K562 (cell line): ENCODE measurements at regions of chr1 and their contacts with region 1.

Region 1: GRCh38 chr1:209860293-209860881 is 32.6 kb downstream of the UTP25 start:
- DNase-seq: peak; percentile 84 to 92 (median 91)
- ATAC-seq: peak; percentile 99
- H3K4me3 ChIP-seq: no peak overlapping the region
- H3K27ac ChIP-seq: no peak overlapping the region
- H3K4me1 ChIP-seq: no peaks in the 10 kb centered on the region
- H3K27me3 ChIP-seq: peaks cover 2 to 14% of the 10 kb centered on the region in 2 experiments; a peak in 3 of 5 replicates
- CTCF ChIP-seq: peak; percentile 89 to 94 (median 91)
- EP300 ChIP-seq: no peak
- POLR2A ChIP-seq: no peak
- RAD21 ChIP-seq: peak; percentile 92 to 96

Region 2: GRCh38 chr1:209899948-209900347 is 39.6 kb after region 1 on chr1:
- CTCF ChIA-PET with region 1: interaction called, 4 read pairs
- POLR2A ChIA-PET with region 1: no interaction called
- in situ Hi-C with region 1: no loop called
- intact Hi-C with region 1: loop called (anchors 1 kb)
- DNase-seq: peak; percentile 24 to 62 (median 42)
- ATAC-seq: peak; percentile 97
- H3K4me3 ChIP-seq: no peak overlapping the region
- H3K27ac ChIP-seq: no peak overlapping the region
- H3K4me1 ChIP-seq: peaks cover 0 to 8% of the 10 kb centered on the region in 2 experiments; a peak in 1 of 5 replicates
- H3K27me3 ChIP-seq: peaks cover 0 to 16% of the 10 kb centered on the region in 2 experiments; a peak in 3 of 5 replicates
- CTCF ChIP-seq: peak; percentile 67 to 80 (median 69)
- EP300 ChIP-seq: no peak
- POLR2A ChIP-seq: no peak
- RAD21 ChIP-seq: peak; percentile 20 to 55

Region 3: GRCh38 chr1:210143465-210144062 is 283.2 kb after region 1 on chr1:
- CTCF ChIA-PET with region 1: interaction called, 3 read pairs
- POLR2A ChIA-PET with region 1: no interaction called
- in situ Hi-C with region 1: no loop called
- intact Hi-C with region 1: loop called (anchors 5 kb)
- DNase-seq: peak; percentile 40 to 73 (median 45)
- ATAC-seq: peak; percentile 64
- H3K4me3 ChIP-seq: no peak overlapping the region
- H3K27ac ChIP-seq: no peak overlapping the region
- H3K4me1 ChIP-seq: no peaks in the 10 kb centered on the region
- H3K27me3 ChIP-seq: no peaks in the 10 kb centered on the region
- CTCF ChIP-seq: peak; percentile 47 to 75 (median 49); a peak in 4 of 6 replicates
- EP300 ChIP-seq: no peak
- POLR2A ChIP-seq: no peak
- RAD21 ChIP-seq: peak; percentile 81